Caco-2 (cell line): ENCODE measurements at regions of chr4 and their contacts with region 1.

Region 1: DNA sequence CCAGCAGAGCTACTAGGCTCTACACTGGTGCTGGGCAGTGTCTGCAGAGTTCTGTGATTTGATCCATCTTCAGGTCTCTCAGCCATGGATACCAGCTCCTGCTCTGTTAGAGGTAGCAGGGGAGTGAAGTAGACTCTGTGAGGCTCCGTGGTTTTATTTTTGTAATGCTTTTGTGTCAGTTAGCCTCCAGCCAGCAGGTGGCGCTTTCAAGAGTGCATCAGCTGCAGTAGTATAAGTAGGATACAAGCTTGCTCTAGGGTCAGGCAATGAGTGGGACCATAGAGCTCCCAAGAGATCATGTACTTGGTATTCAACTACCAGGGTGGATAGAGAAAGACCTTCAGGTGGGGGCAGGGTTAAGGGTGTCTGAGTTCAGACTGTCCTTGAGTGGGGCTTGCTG is 362.5 kb upstream of the TRAM1L1 start:
- DNase-seq: peak in 1 of 2 experiments; percentile 24
- H3K4me3 ChIP-seq: no peak overlapping the region
- H3K4me3 Mint-ChIP-seq: no peak overlapping the region
- H3K27ac Mint-ChIP-seq: no peak overlapping the region
- H3K4me1 ChIP-seq: no peaks in the 10 kb centered on the region
- H3K4me1 Mint-ChIP-seq: no peaks in the 10 kb centered on the region
- H3K27me3 ChIP-seq: no peaks in the 10 kb centered on the region
- H3K27me3 Mint-ChIP-seq: peaks cover 7% of the 10 kb centered on the region
- CTCF ChIP-seq: peak in 1 of 2 experiments; percentile 19

Region 2: DNA sequence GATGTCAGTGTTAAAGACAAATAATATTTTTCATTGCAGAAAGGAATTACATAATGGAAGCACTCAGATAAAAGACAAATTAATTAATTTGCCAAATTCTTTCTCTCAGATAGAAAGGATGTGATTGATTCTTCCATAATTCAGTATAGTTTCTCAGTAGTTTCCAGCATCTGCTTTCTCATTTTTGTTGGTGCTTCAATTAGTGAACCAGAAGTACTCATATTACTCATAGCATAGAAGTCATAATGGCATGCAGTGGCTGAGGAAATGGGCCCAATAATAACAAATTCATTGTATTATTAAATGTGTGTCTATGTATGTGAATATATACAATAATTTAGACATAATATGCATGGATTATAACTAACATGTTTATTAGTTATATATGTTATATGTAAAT is 30.8 kb after region 1 on chr4:
- CTCF ChIA-PET with region 1: no interaction called
- POLR2A ChIA-PET with region 1: no interaction called
- intact Hi-C with region 1: no loop called
- DNase-seq: no peak
- H3K4me3 ChIP-seq: no peak overlapping the region
- H3K4me3 Mint-ChIP-seq: no peak overlapping the region
- H3K27ac Mint-ChIP-seq: no peak overlapping the region
- H3K4me1 ChIP-seq: no peaks in the 10 kb centered on the region
- H3K4me1 Mint-ChIP-seq: no peaks in the 10 kb centered on the region
- H3K27me3 ChIP-seq: no peaks in the 10 kb centered on the region
- H3K27me3 Mint-ChIP-seq: no peaks in the 10 kb centered on the region
- CTCF ChIP-seq: no peak

Region 3: DNA sequence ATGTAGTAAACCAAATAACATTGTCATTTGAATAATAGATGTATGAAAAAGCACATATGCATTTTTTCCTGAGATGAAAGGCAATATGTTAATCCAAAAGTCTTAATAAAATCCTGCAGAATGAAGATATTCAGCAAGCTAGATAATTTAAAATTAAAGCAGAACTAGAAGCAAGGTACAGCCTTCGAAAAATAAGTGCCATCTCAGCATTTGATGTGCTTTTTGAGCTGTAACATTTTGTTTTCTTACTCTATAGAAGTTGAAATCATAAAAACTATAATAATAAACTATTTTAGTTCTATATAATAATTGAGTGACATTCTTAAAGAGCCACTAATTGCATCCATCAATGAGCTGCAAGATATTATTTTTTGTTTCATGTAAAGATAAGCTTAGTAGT is 47.9 kb after region 1 on chr4:
- CTCF ChIA-PET with region 1: no interaction called
- POLR2A ChIA-PET with region 1: no interaction called
- intact Hi-C with region 1: no loop called
- DNase-seq: no peak
- H3K4me3 ChIP-seq: no peak overlapping the region
- H3K4me3 Mint-ChIP-seq: no peak overlapping the region
- H3K27ac Mint-ChIP-seq: no peak overlapping the region
- H3K4me1 ChIP-seq: no peaks in the 10 kb centered on the region
- H3K4me1 Mint-ChIP-seq: peaks cover 7% of the 10 kb centered on the region
- H3K27me3 ChIP-seq: no peaks in the 10 kb centered on the region
- H3K27me3 Mint-ChIP-seq: no peaks in the 10 kb centered on the region
- CTCF ChIP-seq: no peak

Region 4: GRCh38 chr4:117512414-117512813 is 64.5 kb after region 1 on chr4:
- CTCF ChIA-PET with region 1: no interaction called
- POLR2A ChIA-PET with region 1: no interaction called
- intact Hi-C with region 1: no loop called
- DNase-seq: no peak
- H3K4me3 ChIP-seq: no peak overlapping the region
- H3K4me3 Mint-ChIP-seq: no peak overlapping the region
- H3K27ac Mint-ChIP-seq: no peak overlapping the region
- H3K4me1 ChIP-seq: no peaks in the 10 kb centered on the region
- H3K4me1 Mint-ChIP-seq: no peaks in the 10 kb centered on the region
- H3K27me3 ChIP-seq: no peaks in the 10 kb centered on the region
- H3K27me3 Mint-ChIP-seq: peaks cover 2% of the 10 kb centered on the region
- CTCF ChIP-seq: no peak

Region 5: DNA sequence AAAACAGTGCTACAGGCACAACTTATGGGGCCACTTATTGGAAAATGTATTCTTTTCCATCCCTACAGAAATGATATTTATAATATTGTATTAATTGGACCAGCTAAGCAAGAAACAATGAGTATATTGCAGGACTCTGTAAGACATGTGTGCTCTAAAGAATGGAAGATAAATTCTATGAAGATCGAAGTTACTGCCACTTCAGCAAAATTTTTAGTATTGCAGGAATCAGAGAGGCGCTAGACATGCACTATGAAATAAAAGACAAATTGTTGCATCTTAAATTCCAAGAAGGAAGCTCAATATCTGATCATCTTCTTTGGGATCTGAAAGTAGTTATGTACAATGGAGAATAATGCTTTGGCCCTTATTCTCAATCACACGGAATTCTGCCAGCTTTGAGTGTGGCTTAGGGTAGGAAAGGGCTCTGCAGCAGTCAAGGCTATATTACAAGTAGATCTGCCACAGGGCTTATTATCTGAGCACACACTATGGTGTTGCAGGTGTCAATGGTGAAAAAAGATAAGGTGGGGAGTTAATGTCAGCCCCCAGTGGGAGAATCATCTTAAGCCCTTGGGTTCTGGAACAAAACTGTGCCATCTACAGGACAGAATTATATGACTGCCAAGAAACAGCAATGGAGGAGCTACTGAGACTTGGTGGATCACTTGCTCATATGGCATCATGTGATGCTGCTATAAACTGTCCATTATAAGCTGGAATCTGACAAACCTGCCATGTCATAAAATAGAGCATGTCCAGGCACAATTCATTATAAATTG is 252.4 kb after region 1 on chr4:
- CTCF ChIA-PET with region 1: no interaction called
- POLR2A ChIA-PET with region 1: no interaction called
- intact Hi-C with region 1: loop called (anchors 1 kb)
- DNase-seq: peak in 1 of 2 experiments; percentile 6
- H3K4me3 ChIP-seq: no peak overlapping the region
- H3K4me3 Mint-ChIP-seq: no peak overlapping the region
- H3K27ac Mint-ChIP-seq: no peak overlapping the region
- H3K4me1 ChIP-seq: no peaks in the 10 kb centered on the region
- H3K4me1 Mint-ChIP-seq: peaks cover 12% of the 10 kb centered on the region
- H3K27me3 ChIP-seq: no peaks in the 10 kb centered on the region; the same call in 1 of the 2 replicates
- H3K27me3 Mint-ChIP-seq: no peaks in the 10 kb centered on the region
- CTCF ChIP-seq: peak; percentile 28 to 49

Region 6: GRCh38 chr4:118034053-118034785 is 586.3 kb after region 1 on chr4 and contains the start of gene NDST3:
- CTCF ChIA-PET with region 1: no interaction called
- POLR2A ChIA-PET with region 1: no interaction called
- intact Hi-C with region 1: loop called (anchors 10 kb)
- DNase-seq: peak; percentile 41 to 58
- H3K4me3 ChIP-seq: peak within 1 kb of the TSS; percentile 28
- H3K4me3 Mint-ChIP-seq: peak within 1 kb of the TSS; percentile 70
- H3K27ac Mint-ChIP-seq: no peak within 1 kb of the TSS
- H3K4me1 ChIP-seq: no peaks in the 10 kb centered on the region
- H3K4me1 Mint-ChIP-seq: no peaks in the 10 kb centered on the region
- H3K27me3 ChIP-seq: peaks cover 2% of the 10 kb centered on the region; the same call in 1 of the 2 replicates
- H3K27me3 Mint-ChIP-seq: peaks cover 12% of the 10 kb centered on the region
- CTCF ChIP-seq: peak; percentile 21 to 33
- total RNA-seq, gene NDST3: not detected in 2 replicates